ENCODE measurements at regions of chr5 and their contacts with region 1.

Region 1: GRCh38 chr5:125198270-125198974 is 452.0 kb upstream of the ZNF608 start:
- DNase-seq: peak; percentile 85

Region 2: DNA sequence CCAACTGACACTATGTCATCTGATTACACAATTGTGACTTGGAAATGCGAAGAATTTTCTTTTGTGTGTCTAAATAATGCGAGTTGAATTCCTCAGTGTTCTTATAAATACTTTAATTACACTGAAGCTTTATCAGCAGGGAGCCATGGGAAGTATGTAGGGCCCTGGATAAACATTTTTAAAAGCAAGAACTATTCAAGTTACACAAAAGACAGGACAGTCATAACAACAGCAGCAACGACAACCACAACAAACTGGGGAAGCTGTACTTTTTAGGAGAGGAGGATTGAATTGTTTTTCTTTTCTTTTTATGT is 201.7 kb before region 1 on chr5:
- intact Hi-C with region 1: no loop called
- DNase-seq: no peak

Region 3: GRCh38 chr5:125043781-125044391 is 154.5 kb before region 1 on chr5:
- intact Hi-C with region 1: loop called (anchors 5 kb)
- DNase-seq: peak; percentile 87

Region 4: DNA sequence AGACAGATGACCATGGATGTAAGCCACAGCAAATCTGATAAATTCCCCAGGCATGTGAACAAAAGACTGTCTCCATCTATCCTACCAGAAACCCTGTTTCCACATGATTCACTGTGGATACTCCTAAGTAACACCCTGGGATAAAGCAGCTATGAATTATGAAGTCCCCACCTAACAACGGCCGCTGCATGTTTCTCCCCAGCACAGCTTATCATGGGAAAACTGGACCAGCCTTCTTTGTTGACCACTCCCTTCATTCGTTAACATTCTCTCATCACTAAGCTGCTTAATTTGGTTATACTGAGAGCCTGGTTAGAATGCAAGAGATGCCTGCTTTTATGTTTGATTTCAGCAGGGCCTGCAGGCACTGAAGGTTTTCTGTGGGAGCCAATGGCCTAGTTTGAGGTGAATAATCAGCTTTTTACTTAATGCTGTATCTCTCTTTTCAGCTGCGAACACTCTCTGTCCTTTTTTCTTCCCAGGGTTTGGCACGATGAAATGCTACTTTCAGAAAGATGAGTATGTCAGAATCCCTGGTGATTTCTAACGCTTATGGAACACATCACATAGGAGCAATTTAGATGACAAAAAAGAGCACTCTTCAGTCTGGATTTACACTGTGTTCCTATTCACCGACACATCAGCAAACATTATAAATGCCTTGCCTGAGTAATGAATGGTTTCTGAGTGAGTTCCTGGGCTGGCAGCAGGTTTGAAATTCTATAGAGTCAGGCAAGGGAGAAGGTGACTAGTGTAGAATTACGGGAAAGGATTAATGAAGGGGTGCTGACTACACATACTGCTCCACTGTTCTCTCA is 133.6 kb before region 1 on chr5:
- intact Hi-C with region 1: no loop called
- DNase-seq: no peak

Region 5: GRCh38 chr5:125257057-125257972 is 58.9 kb after region 1 on chr5:
- intact Hi-C with region 1: loop called (anchors 2 kb)
- DNase-seq: no peak